ENCODE measurements at regions of chr11 and their contacts with region 1.

Region 1: DNA sequence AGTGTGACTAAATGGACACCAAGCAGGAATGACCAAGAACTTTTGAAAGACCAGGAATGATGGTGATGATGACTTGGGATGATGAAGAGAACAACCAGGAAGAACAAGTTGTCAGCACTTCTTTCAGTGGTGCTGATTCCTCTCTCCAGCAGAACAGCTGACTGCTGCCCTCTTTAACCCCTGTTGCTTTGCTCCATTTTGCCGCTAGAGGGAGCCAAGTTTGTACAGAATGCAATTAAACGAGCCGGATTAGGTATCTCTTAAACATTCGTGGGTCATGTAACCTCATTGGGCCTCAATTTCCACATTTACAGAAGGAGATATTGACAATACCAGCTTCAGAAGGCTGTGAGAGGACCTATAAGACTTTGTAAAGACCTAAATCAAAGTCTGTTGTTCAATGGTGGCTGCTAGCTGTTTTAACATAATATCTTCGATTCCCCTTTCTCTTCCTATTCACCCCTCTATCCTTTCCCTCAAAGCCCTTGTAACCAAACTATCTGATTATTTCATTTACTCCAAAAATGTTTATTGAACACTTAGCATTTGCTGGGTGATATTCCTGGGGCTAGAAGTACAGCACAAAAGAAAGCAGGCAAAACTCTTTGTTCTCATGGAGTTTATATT is 1.9 kb downstream of the OR4S1 start:
- DNase-seq: peak; percentile 72
- H3K4me3 Mint-ChIP-seq: no peak overlapping the region
- H3K27ac Mint-ChIP-seq: no peak overlapping the region
- H3K4me1 Mint-ChIP-seq: no peaks in the 10 kb centered on the region
- H3K27me3 Mint-ChIP-seq: no peaks in the 10 kb centered on the region
- CTCF ChIP-seq: peak; percentile 92

Region 2: GRCh38 chr11:48116437-48117228 is 191.2 kb before region 1 on chr11:
- CTCF ChIA-PET with region 1: interaction called, 3 read pairs
- POLR2A ChIA-PET with region 1: no interaction called
- intact Hi-C with region 1: loop called (anchors 5 kb)
- DNase-seq: peak; percentile 36
- H3K4me3 Mint-ChIP-seq: no peak overlapping the region
- H3K27ac Mint-ChIP-seq: no peak overlapping the region
- H3K4me1 Mint-ChIP-seq: no peaks in the 10 kb centered on the region
- H3K27me3 Mint-ChIP-seq: no peaks in the 10 kb centered on the region
- CTCF ChIP-seq: peak; percentile 50

Measured in MCF 10A (cell line).